ENCODE measurements at regions of chr1 and their contacts with region 1.

Region 1: DNA sequence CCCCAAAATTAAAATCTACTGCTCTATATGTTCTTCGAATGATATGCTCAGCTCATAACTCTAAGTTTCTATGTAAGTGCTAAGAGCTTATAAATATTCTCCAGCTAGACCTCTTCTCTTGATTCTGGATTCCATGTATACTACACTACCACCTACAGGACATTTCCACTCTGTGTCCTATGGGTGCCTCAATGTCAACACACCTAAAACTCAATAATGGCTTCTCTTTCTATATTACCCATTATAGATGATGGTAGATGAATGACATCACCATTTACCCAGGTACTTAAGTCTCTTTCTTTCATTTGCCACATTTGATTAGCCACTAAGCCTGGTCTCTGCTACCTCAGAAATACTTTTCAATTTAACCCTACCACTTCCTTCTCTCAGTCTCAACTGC is 41.3 kb downstream of the TBX19 start:
- DNase-seq: no peak
- H3K4me3 ChIP-seq: no peak overlapping the region
- H3K27ac ChIP-seq: no peak overlapping the region
- H3K4me1 ChIP-seq: no peaks in the 10 kb centered on the region
- H3K27me3 ChIP-seq: no peaks in the 10 kb centered on the region
- CTCF ChIP-seq: peak in 1 of 3 experiments; percentile 42

Region 2: DNA sequence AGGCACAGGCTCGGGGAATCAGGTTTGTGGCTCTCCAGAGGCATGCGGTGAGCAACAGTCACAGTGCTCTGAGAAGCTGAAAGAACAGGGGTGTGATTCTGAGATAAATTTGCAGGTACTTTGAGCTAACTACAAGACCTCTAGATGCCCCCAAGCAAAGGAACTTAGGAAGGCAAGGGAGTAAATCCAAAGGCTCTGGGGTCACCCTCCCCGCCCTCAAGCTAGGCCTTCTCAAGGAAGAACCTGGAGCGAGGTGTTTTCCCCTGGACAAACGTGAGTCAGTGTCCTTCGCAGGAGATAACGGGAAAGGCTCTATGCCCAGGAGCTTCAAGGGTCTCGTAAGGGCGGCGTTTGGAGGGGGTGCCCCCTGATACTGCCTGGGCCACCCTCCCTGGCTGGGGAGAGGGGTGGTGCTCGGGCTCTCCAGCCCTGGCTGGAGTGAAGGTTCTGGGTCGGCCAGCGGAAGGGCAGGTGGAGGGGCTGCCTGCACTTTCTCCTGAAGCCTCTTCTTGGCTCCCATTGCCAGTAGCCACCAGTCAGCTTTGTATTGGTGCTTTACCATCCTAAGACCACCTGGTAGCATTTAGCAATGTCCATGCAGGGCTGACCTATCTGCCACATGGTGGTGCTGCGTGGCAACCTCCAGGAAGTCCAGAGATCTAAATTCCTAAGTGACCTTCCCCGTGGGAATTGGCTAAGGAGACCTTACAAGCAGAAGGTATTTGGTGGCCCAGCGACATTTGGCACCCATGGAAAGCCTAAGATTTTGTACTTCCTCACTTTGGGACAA is 229.2 kb before region 1 on chr1:
- intact Hi-C with region 1: loop called (anchors 5 kb)
- DNase-seq: peak in 1 of 2 donors; percentile 63
- H3K4me3 ChIP-seq: no peak overlapping the region
- H3K27ac ChIP-seq: peak overlapping the region in 1 of 2 donors; percentile 16
- H3K4me1 ChIP-seq: peaks cover 0 to 5% of the 10 kb centered on the region in 2 donors
- H3K27me3 ChIP-seq: no peaks in the 10 kb centered on the region
- CTCF ChIP-seq: peak in 2 of 3 experiments; percentile 35 to 50

Region 3: GRCh38 chr1:168234846-168235547 is 86.9 kb before region 1 on chr1:
- intact Hi-C with region 1: loop called (anchors 5 kb)
- DNase-seq: no peak
- H3K4me3 ChIP-seq: no peak overlapping the region
- H3K27ac ChIP-seq: peak overlapping the region; percentile 64 to 70
- H3K4me1 ChIP-seq: peaks cover 5 to 23% of the 10 kb centered on the region in 2 donors
- H3K27me3 ChIP-seq: no peaks in the 10 kb centered on the region
- CTCF ChIP-seq: peak; percentile 31 to 64 (median 61)

Region 4: GRCh38 chr1:168245042-168245441 is 76.9 kb before region 1 on chr1:
- intact Hi-C with region 1: no loop called
- DNase-seq: no peak
- H3K4me3 ChIP-seq: no peak overlapping the region
- H3K27ac ChIP-seq: peak overlapping the region in 1 of 2 donors; percentile 76
- H3K4me1 ChIP-seq: peaks cover 0 to 28% of the 10 kb centered on the region in 2 donors
- H3K27me3 ChIP-seq: no peaks in the 10 kb centered on the region
- CTCF ChIP-seq: no peak

Measured in ascending aorta (tissue), 2 donors.